Right ventricle myocardium inferior (tissue), 1 donor: ENCODE measurements at regions of chr4 and their contacts with region 1.

Region 1: DNA sequence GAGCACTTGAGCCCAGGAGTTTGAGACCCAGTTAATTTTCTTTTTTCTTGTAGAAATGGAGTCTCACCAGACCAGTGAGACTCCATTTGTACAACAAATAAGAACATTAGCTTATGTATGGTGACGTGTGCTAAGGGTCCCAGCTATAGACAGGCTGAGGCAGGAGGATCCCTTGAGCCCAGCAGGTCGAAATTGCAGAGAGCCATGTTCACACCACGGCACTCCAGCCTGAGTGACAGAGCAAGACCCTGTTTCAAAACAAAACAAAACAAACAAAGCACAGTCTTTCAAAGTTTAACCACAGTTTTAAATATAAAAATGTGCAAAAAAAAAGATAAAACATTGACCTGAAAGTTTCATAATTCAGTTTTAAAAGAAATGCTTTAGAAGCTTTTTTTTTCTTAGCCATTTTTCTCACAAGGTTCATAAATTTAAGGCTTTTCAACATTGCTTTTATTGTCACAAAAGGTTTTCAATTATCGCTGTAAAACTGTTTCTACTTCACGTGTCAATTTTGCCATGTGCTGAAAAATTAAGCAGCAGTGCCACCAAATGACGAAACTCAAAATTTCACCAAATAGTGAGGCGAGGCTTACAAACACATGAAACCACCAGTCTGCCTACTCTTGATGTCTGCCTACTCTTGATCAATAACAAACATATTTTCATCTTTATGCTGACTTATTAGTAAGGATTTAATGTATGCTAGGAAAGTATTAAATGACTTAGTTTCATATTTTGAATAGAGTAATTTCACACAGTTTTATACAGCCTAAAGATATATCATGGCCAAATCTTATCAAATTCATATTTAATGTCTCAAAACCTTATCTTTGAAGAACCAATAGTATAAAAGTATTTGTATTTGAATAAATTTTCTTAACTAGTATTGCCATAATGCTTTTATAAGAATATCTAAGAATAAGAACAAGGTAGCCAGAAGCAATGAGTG is 126.3 kb downstream of the NEK1 start:
- DNase-seq: no peak
- ATAC-seq: no peak

Region 2: GRCh38 chr4:169024762-169025161 is 461.3 kb before region 1 on chr4:
- intact Hi-C with region 1: loop called (anchors 2 kb)
- DNase-seq: no peak
- ATAC-seq: peak; percentile 78

Region 3: DNA sequence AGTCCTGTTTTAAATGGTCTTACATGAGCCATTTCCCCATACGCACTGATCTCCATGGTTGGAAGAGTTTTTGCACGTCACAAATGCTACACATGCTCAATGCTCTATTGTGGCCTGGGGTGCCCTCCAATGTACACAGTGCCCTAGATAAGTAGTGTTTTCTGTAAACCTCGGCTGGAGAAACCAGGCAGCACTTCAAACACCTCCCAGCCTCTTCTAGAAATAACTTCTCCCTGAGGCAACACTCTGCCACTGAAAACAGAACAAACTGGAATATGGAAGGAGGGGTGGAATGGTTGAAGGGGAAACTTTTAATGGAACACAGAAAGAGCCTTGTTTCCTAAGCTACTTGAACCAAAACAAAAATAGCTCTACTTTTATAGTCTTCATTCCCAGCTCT is 352.1 kb before region 1 on chr4:
- intact Hi-C with region 1: loop called (anchors 10 kb)
- DNase-seq: no peak
- ATAC-seq: peak; percentile 55

Region 4: DNA sequence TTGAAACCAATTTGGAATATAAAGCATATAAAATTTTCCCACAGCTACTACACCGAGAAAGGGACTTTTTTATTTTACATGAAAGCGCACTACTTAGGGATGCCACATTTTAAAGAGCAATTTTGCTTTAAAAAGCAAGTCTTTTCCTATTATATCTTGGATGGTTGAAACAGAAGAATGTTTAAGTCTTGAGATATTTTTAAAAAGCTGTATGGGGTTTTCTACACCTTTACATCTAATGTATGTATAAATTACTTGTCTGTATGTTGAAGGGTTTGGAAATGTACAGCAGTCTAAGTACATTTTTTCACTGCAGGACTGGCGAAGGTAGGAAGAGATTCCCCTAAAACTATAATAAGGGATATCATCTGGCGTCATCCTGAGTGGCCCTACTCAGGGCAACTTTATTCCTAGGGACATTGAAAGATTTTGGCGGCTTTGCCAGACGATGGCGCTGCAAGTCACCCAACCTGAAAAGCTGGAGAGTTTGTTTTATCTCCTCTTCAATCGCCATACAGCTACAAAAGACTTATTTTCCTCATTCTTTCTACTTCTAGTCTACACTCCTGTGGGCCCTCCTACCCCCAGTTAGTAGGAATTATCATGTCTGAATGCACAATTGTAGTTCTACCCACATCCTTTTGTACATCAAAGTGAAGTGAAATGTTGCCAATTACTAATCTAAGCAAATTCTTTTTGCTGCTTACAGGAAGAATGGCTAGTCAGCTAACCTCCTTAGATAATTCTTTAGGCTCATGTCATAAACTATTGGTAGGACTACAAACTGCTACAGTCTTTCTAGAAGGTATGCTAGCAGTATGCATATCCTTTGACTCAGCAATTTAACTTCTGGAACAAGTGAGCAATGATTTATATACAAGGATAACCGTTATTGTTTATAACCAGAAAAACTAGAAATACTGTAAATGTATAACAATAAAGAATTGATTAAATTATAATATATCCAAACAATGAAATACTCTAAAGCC is 127.1 kb after region 1 on chr4:
- intact Hi-C with region 1: no loop called
- DNase-seq: peak; percentile 76
- ATAC-seq: peak; percentile 75

Region 5: GRCh38 chr4:170057866-170058265 is 571.8 kb after region 1 on chr4:
- intact Hi-C with region 1: no loop called
- DNase-seq: no peak
- ATAC-seq: no peak